MCF 10A (cell line): ENCODE measurements at regions of chr4 and their contacts with region 1.

Region 1: GRCh38 chr4:38663801-38664705 is at the start of gene KLF3:
- DNase-seq: peak; percentile 83
- H3K4me3 Mint-ChIP-seq: peak within 1 kb of the TSS; percentile 92
- H3K27ac Mint-ChIP-seq: peak within 1 kb of the TSS; percentile 76
- H3K4me1 Mint-ChIP-seq: peaks cover 11% of the 10 kb centered on the region
- H3K27me3 Mint-ChIP-seq: no peaks in the 10 kb centered on the region
- CTCF ChIP-seq: no peak
- total RNA-seq, gene KLF3: 45.3 and 51.2 TPM in 2 replicates

Region 2: DNA sequence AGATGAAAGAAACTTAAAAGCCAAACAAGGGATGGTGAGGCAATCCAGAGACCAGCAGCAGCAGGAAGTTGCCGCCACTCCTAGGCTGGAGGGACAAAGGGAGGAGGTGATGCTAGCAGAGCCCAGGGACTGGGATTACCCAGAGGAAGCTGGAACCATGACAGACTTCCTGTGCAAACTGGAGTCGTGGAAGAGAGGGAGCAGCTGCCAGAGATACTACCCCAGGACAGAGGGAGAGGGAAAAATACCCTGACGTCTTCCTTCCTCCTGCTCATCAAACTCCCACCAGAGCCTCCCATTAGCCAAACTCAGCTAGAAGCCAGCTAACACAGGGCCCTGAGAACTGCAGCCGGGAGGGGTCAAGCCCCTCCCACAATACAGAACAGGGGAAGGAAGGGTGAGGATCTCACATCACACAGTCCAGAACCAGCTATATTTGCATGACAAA is 101.3 kb before region 1 on chr4:
- CTCF ChIA-PET with region 1: interaction called, 6 read pairs
- POLR2A ChIA-PET with region 1: interaction called, 5 read pairs
- intact Hi-C with region 1: loop called (anchors 2 kb)
- DNase-seq: peak; percentile 67
- H3K4me3 Mint-ChIP-seq: no peak overlapping the region
- H3K27ac Mint-ChIP-seq: peak overlapping the region; percentile 16
- H3K4me1 Mint-ChIP-seq: peaks cover 44% of the 10 kb centered on the region
- H3K27me3 Mint-ChIP-seq: no peaks in the 10 kb centered on the region
- CTCF ChIP-seq: no peak

Region 3: GRCh38 chr4:38620790-38621684 is 43.0 kb before region 1 on chr4:
- CTCF ChIA-PET with region 1: interaction called, 4 read pairs
- POLR2A ChIA-PET with region 1: interaction called, 82 read pairs
- intact Hi-C with region 1: loop called (anchors 2 kb)
- DNase-seq: peak; percentile 95
- H3K4me3 Mint-ChIP-seq: no peak overlapping the region
- H3K27ac Mint-ChIP-seq: peak overlapping the region; percentile 57
- H3K4me1 Mint-ChIP-seq: peaks cover 29% of the 10 kb centered on the region
- H3K27me3 Mint-ChIP-seq: no peaks in the 10 kb centered on the region
- CTCF ChIP-seq: no peak

Region 4: DNA sequence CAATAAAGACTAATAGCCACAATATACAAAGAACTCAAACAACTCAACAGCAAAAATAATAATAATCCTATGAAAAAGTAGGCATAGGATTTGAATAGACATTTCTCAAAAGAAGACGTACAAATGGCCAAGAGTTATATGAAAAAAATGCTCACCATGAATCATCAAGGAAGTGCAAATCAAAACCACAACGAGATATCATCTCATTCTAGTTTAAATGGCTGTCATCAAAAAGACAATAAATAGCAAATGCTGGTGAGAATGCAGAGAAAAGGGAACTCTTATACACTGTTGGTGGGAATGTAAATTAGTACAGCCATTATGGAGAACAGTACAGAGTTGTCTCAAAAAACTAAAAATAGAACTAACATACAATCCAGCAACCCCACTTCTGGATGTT is 173.8 kb after region 1 on chr4:
- CTCF ChIA-PET with region 1: no interaction called
- POLR2A ChIA-PET with region 1: no interaction called
- intact Hi-C with region 1: no loop called
- DNase-seq: peak; percentile 29
- H3K4me3 Mint-ChIP-seq: no peak overlapping the region
- H3K27ac Mint-ChIP-seq: peak overlapping the region; percentile 36
- H3K4me1 Mint-ChIP-seq: peaks cover 13% of the 10 kb centered on the region
- H3K27me3 Mint-ChIP-seq: no peaks in the 10 kb centered on the region
- CTCF ChIP-seq: no peak